Activated CD4-positive, alpha-beta T cell treated with anti-CD3 and anti-CD28 coated beads for 36 hours (primary cell): ENCODE measurements at regions of chr12 and their contacts with region 1.

Region 1: DNA sequence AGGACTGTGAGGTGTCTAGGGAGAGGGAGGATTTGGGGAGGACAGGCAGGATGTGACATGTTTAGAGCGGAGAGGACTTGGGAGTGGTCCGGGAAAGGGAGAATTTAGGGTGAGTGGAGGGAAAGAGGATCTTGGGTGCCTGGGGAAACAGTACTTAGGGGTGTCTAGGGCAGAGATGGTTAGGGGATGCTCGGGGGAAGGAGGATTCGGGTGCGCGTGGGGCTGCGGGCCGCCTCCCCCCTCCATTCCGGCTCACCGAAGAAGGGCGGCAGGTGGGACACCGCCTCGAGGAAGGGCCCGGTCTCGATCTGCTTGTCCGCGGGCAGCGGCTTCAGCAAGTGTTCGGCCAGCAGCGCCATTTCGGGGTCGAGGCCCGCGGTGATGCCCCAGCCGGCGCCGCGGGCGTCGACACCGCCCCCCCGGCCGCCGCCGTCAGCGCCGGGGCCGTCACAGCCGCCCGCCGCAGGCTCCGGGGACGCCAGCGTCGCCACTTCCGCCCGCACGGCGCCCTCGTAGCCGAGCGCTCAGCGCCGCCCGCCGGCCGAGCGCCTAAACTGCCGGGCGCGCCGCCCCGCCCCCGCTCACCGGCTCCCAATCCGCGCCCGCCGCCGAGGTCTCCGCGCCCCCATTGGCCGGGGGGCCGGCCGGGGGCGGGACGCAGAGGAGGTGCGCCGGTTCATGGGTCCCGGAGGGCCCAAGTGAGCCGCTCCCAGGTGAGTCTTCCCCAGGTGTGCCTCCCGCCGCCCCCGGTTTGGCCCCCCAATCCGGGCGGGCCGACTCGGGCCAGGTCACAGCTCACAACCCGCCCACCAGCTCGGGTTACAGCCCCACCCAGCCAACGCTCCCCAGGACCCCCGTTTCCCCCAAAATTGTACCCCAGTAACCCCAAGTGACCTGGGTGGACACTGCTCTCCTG is at the start of gene GLTP:
- DNase-seq: peak; percentile 93
- ATAC-seq: peak; percentile 97
- H3K4me3 Mint-ChIP-seq: peak within 1 kb of the TSS; percentile 86
- H3K27ac Mint-ChIP-seq: peak within 1 kb of the TSS; percentile 88
- H3K4me1 Mint-ChIP-seq: peaks cover 36% of the 10 kb centered on the region
- H3K27me3 Mint-ChIP-seq: no peaks in the 10 kb centered on the region
- total RNA-seq, gene GLTP: 24.2 to 26.9 TPM

Region 2: DNA sequence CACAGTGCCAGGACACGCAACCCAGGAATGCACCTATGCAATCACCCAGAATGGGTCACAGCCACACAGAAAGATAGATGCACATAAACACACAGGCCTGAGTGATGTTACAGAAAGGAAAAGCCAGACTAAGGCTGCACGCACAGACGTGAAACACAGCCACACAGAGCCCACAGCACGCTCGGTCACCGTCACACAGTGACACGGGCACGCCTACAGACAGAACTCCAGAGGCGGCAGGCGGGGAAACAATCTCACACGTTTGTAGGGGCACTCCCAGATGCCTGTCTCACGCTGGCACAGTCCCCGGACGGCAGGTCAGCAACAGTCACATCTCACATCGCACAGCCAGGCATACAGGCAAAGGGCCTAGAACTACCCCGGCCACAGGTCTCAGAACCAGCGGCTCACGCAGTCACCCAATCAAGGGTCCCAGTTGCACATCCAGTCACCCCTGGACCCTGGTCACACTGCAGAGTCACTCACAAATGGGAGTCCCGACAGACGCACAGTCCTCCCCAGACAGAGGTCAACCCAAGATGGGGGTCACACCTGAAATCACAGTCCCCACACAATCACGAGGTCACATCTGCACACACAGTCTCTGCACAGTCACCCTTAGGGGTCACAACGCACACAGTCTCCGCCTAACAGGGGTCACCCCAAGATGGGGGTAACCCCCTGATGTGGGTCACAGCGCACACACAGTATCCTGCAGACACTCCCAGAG is 1023.7 kb before region 1 on chr12:
- CTCF ChIA-PET with region 1: no interaction called
- POLR2A ChIA-PET with region 1: no interaction called
- intact Hi-C with region 1: loop called in 1 of 2 experiments (anchors 10 kb)
- DNase-seq: peak; percentile 81
- ATAC-seq: peak; percentile 64
- H3K4me3 Mint-ChIP-seq: peak overlapping the region; percentile 82
- H3K27ac Mint-ChIP-seq: peak overlapping the region; percentile 86
- H3K4me1 Mint-ChIP-seq: peaks cover 43% of the 10 kb centered on the region
- H3K27me3 Mint-ChIP-seq: peaks cover 2% of the 10 kb centered on the region

Region 3: DNA sequence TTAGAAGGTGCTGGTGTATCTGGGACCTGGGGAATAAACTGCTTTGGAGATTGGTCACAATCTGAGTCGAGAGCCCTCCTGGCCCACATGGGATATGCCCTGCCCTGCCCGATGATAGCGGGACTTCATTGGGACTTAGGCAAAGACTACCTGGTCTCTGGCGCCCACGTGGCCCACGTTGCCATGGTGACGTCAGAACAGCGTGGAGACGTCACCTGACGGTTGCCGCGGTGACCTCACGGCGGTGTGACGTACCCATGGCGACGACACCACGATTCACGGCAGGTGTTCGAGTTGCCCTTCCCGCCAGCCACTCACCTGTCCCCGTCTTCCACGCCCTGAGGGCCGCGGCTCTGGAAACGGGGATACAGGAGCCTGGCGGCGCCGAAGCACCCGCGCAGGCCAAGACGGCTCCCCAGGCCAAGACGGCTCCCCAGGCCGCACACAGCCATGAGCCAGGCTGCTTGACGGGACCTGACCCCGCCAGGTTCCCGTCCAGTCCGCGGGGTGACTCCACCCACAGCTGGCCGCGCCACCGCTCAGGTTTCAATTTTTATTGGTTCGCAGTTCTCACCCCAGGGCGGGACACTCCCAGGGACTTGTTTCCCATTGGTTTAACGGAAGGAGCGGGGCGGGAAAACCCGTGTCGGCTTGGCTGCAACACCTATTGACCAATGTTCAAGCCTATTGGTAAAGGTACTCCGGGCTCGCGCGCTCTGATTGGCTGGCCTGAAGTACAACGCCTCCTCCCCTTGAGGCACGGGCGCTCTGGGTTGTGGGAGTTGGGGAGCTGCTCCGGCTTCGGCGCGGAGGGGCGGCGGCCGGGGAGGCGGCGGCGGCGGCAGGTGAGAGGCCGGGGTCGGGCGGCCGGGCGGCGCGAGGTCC is 307.0 kb before region 1 on chr12 and contains the starts of genes MMAB and MVK:
- CTCF ChIA-PET with region 1: interaction called, 3 read pairs
- POLR2A ChIA-PET with region 1: no interaction called
- intact Hi-C with region 1: loop called in 1 of 2 experiments (anchors 1 kb)
- DNase-seq: peak; percentile 99
- ATAC-seq: peak; percentile 97
- H3K4me3 Mint-ChIP-seq: peak within 1 kb of the TSS; percentile 90
- H3K27ac Mint-ChIP-seq: peak within 1 kb of the TSS; percentile 96
- H3K4me1 Mint-ChIP-seq: peaks cover 23% of the 10 kb centered on the region
- H3K27me3 Mint-ChIP-seq: no peaks in the 10 kb centered on the region
- total RNA-seq, gene MMAB: 37.7 to 44.3 TPM
- total RNA-seq, gene MVK: 17.8 to 18.7 TPM

Region 4: DNA sequence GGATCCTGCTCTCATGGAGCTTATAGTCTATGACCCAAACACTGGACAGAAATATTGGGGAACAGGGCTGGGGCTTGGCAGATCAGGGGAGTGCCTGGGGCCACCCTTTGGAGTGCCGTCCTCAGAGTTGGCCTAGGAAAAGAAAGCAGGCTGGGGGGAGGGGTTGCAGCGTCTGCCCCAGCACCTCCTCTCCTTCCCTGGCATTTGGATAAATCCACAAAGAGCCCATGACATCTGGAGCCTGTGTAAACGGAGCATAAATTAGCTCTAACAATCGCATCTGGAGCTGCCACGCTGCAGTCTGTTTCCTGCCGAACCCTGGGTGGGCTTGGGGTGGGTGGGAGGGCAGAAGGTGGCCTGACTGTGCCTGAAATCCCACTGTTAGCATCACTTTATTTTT is 242.9 kb before region 1 on chr12:
- CTCF ChIA-PET with region 1: no interaction called
- POLR2A ChIA-PET with region 1: no interaction called
- intact Hi-C with region 1: no loop called
- DNase-seq: no peak
- ATAC-seq: no peak
- H3K4me3 Mint-ChIP-seq: no peak overlapping the region
- H3K27ac Mint-ChIP-seq: no peak overlapping the region
- H3K4me1 Mint-ChIP-seq: no peaks in the 10 kb centered on the region
- H3K27me3 Mint-ChIP-seq: no peaks in the 10 kb centered on the region

Region 5: DNA sequence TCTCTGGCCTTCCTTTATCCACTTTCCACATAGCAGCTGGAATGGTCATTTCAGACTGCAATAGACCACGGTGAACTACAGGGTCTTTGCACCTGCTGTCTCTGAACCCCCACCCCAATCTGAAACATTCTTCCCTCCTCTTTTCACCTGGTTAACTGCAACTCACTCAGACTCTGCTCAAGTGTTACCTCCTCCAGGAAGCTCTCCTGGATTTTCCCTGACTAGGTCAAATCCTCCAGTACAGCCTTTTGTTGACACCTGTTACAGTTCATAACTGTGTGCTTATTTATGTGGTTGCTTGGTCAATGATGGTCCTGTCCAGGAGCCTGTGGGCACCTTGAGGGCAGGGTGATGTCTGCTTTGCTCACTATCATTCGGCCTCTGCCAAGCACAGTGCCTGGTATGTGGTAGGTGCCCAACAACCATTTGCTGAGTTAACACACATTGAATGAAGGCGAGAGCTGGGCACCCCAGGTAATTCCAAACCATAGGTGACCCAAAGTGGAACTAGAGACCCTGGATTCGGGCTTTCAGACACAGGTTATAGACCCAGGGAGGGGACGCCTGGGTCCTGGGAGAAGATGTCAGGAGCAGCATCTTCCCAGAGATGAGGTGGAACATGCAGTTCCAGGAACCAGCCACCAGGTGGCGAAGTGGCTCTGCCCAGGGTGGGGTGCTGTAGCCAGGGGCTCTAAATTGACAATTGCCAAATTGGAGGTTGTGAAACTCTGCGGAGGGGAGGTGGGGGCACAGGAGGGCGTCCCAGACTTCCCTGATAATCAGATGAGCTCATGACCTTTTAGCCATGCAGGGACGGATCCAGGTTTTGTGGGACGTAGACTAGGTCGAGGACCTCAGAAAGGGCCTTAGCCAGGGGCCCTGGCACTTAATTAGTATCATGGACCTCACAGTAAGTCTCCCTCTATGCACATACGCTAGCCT is 75.2 kb before region 1 on chr12:
- CTCF ChIA-PET with region 1: interaction called, 9 read pairs
- POLR2A ChIA-PET with region 1: no interaction called
- intact Hi-C with region 1: loop called (anchors 1 kb)
- DNase-seq: peak; percentile 80
- ATAC-seq: peak; percentile 81
- H3K4me3 Mint-ChIP-seq: no peak overlapping the region
- H3K27ac Mint-ChIP-seq: no peak overlapping the region
- H3K4me1 Mint-ChIP-seq: no peaks in the 10 kb centered on the region
- H3K27me3 Mint-ChIP-seq: no peaks in the 10 kb centered on the region

Region 6: DNA sequence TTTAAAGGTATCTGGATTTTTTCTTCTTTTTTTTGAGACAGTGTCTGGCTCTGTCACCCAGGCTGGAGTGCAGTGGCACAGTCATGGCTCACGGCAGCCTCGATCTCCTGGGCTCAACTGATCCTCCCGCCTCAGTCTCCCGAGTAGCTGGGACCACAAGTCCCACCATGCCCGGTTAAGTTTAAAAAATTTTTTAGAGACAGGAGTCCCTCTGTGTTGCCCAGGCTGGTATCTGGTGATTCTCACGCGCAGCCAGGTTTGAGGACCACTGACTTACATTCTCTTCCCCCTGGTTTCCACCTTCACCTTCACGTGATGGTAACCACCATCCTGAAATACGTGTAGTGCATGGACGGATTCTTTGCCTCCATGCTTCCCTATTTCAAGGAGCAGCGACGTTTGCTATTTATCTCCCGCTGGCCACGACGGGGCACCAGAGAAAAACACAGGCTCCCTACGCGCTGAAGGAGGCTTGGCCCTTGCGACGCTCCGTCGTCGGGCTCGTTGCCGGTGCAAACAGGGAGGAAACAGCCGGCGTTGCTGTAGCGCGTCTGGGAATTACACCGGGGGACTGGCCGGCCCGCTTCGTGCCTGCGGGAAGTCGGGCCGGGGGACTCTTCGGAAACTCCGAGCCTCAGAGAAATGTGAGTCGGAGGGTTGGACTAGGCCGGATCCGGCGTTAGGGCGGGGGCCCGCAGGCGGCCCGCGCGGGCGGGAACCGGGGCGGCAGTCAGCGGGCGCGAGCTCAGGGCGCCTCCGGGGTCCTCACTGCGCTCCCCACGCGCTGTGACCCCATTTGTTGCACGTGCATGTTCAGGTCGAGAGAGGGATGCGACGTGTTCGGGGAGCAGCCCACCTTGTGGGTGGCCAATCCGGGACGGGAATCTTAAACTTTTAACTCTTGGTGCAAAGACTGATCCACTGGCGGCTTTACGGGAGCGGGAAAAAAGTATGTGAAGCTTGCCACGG is 19.8 kb after region 1 on chr12 and contains the start of gene TCHP:
- CTCF ChIA-PET with region 1: interaction called, 3 read pairs
- POLR2A ChIA-PET with region 1: no interaction called
- intact Hi-C with region 1: loop called (anchors 1 kb)
- DNase-seq: peak; percentile 88
- ATAC-seq: peak; percentile 90
- H3K4me3 Mint-ChIP-seq: peak within 1 kb of the TSS; percentile 92
- H3K27ac Mint-ChIP-seq: peak within 1 kb of the TSS; percentile 100
- H3K4me1 Mint-ChIP-seq: peaks cover 25% of the 10 kb centered on the region
- H3K27me3 Mint-ChIP-seq: no peaks in the 10 kb centered on the region
- total RNA-seq, gene TCHP: 15.1 to 16.1 TPM

Region 7: DNA sequence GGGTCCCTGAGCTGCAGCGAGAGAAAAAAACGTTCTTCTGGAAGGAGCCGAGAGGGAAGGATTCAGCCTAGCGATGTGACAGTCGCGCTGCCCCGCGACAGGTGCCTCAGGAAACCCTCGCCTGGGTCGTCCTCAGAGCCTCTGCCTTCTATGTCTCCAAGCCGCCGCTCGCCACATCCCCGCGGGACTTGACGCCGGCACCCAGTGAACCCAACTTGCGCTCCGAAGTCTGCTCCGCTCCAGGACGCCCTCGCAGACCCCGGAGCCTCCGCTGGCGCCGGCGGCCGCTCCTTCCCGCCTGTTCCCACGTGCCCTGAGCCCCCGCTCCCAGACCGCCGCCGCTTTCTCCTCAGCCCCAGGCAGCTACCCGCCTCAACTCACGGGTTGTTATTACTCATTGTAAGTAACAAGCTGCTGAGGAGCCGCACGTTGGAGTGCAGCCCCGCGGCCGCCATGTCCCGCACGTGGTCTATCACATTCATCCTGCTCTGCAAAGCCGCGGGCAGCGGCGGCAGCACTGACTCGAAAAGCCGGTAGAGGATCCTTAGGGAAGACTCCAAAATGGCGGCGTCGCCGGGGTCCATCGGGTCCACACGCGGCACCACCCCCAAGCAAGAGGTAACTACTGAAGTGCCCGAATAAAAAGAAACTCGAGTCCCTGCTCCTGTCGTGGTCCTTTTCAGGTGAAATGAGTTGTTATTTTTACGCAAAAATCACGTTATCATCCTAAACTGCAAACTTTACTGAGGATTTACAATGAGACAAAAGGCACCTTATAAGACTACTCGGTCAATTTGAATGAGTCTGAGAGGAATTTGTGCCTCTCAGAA is 523.1 kb after region 1 on chr12 and contains the start of gene ANAPC7:
- CTCF ChIA-PET with region 1: no interaction called
- POLR2A ChIA-PET with region 1: no interaction called
- intact Hi-C with region 1: loop called in 1 of 2 experiments (anchors 2 kb)
- DNase-seq: peak; percentile 93
- ATAC-seq: peak; percentile 94
- H3K4me3 Mint-ChIP-seq: peak within 1 kb of the TSS; percentile 88
- H3K27ac Mint-ChIP-seq: peak within 1 kb of the TSS; percentile 99
- H3K4me1 Mint-ChIP-seq: peaks cover 21% of the 10 kb centered on the region
- H3K27me3 Mint-ChIP-seq: no peaks in the 10 kb centered on the region
- total RNA-seq, gene ANAPC7: 52.6 to 63.6 TPM